Sigmoid colon (tissue), 7 donors: ENCODE measurements at regions of chr10 and their contacts with region 1.

Region 1: DNA sequence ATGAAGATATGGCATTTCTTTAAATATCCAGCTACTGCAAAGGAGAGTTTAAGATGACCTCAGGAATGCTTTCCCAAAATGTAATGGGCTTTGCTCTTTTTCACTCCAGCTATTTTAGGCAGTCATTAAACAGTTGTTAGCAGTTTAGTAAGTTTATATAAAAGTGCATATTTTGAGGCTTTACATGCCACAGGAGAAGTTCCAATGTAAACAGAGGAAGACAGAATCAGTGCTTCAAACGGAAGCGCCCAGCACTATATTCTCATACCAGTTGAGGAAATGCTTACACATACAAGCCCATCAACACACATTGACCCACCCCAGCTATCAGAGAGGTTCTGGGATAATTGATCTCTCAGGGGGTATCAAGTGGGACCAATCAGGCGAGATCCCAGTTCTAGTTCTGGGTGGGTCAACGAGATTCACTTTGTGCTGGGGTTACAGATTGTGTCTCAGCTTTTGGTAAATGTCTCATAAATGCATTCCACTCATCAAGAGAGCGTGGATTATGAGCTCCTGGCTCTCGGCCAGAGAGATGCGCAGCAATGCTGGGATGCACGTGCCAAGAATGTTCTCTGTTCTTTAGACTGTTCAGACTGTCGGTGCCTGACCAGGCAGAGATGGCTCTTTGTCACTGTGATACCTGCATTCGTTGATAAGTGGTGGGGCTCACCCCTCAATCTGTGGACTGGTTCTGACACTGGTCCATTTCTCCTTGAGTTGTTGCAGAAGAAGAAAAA is 55.0 kb downstream of the CACNB2 start:
- DNase-seq: peak; percentile 74
- H3K4me3 ChIP-seq: no peak overlapping the region
- H3K27ac ChIP-seq: peak overlapping the region; percentile 80 to 92 (median 84)
- H3K4me1 ChIP-seq: peaks cover 0 to 62% (median 45%) of the 10 kb centered on the region in 4 donors
- H3K27me3 ChIP-seq: no peaks in the 10 kb centered on the region
- CTCF ChIP-seq: no peak
- EP300 ChIP-seq: peak in 2 of 4 donors; percentile 2 to 10
- POLR2A ChIP-seq: no peak

Region 2: GRCh38 chr10:18157881-18158280 is 37.3 kb before region 1 on chr10:
- intact Hi-C with region 1: loop called (anchors 5 kb)
- DNase-seq: no peak
- H3K4me3 ChIP-seq: no peak overlapping the region
- H3K27ac ChIP-seq: peak overlapping the region; percentile 73 to 86 (median 80)
- H3K4me1 ChIP-seq: peaks cover 0 to 42% (median 25%) of the 10 kb centered on the region in 4 donors
- H3K27me3 ChIP-seq: no peaks in the 10 kb centered on the region
- CTCF ChIP-seq: no peak
- EP300 ChIP-seq: no peak
- POLR2A ChIP-seq: no peak

Region 3: DNA sequence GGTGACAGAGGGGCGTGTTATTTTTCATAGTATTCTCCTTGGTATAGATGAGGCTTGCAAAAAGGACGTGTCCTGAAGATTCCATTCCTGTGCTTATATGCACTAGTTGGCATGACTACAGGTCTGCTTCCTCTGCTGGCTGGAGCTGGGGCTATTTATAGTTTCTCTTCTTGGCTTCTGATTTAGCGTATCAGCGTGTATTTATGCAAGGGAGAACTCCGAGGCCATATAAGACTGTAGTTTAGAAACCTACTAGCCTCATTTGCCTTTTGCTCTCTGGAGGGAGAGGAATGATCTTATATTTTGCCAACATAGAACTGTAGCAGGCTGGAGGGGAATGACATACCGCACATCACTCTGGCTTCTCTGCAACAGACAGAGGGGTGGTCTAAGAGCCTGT is 15.3 kb before region 1 on chr10:
- intact Hi-C with region 1: loop called (anchors 2 kb)
- DNase-seq: peak; percentile 79
- H3K4me3 ChIP-seq: peak overlapping the region in 2 of 4 donors; percentile 15 to 21
- H3K27ac ChIP-seq: peak overlapping the region; percentile 80 to 92 (median 87)
- H3K4me1 ChIP-seq: peaks cover 0 to 50% (median 43%) of the 10 kb centered on the region in 4 donors
- H3K27me3 ChIP-seq: no peaks in the 10 kb centered on the region
- CTCF ChIP-seq: no peak
- EP300 ChIP-seq: peak; percentile 25 to 84 (median 58)
- POLR2A ChIP-seq: no peak

Region 4: DNA sequence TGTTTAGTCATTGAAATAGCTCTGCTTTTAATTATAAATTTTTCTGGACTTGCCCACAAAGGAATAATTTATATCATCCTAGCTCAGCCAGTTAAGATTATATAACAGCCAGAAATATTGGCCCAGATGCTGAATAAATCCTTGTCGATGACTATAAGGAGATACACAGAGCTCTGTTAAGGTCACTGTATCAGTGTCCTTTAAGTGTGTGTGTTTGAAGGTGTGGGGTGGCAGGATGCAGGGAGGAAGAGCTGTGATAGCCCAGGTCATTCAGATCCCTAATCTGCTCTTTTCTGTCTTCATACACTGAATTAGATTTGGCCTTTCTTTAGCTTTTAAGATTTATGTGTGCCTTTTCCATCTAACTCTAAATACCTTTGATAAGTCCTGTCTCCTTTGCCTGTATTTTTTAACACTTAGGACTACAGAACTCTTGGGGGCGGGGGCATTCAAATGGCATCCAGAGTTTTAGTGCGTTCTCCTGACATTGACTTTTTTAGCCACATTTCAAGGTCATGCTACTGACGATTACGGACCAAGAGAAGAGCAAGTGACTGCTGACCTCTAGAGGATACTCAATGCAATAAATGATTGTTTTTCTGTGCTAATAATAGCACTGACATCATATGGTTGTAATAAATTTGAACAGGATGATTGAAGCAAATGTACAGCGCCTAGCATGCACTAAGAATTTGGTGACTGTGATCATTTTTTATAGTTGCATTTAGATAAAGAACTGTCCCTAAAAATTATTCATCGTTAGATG is 117.3 kb after region 1 on chr10:
- intact Hi-C with region 1: no loop called
- DNase-seq: no peak
- H3K4me3 ChIP-seq: no peak overlapping the region
- H3K27ac ChIP-seq: peak overlapping the region; percentile 48 to 81 (median 61)
- H3K4me1 ChIP-seq: peaks cover 0 to 34% (median 25%) of the 10 kb centered on the region in 4 donors
- H3K27me3 ChIP-seq: no peaks in the 10 kb centered on the region
- CTCF ChIP-seq: peak in 2 of 4 experiments; percentile 5 to 16
- EP300 ChIP-seq: no peak
- POLR2A ChIP-seq: no peak

Region 5: DNA sequence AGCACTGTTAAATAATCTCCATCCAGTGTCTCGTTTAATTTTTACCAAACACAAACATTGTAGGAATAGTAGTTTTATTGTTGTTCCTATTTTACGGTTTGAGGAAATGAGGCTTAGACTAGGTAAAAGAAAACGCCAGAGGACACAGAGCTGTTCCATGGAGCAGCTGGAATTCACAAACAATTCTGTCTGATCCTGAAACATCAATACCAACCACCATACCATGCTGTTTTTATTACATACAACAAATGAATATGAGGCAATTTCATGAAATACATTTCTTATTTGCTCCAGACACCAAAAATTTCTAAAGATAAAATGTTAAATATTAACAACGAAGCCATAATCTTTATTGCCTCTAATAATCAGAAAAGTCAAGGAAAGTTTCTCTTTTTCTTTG is 862.8 kb after region 1 on chr10:
- intact Hi-C with region 1: no loop called
- DNase-seq: no peak
- H3K4me3 ChIP-seq: no peak overlapping the region
- H3K27ac ChIP-seq: no peak overlapping the region
- H3K4me1 ChIP-seq: no peaks in the 10 kb centered on the region
- H3K27me3 ChIP-seq: no peaks in the 10 kb centered on the region
- CTCF ChIP-seq: no peak
- EP300 ChIP-seq: no peak
- POLR2A ChIP-seq: no peak